MCF 10A (cell line): ENCODE measurements at regions of chr9 and their contacts with region 1.

Region 1: DNA sequence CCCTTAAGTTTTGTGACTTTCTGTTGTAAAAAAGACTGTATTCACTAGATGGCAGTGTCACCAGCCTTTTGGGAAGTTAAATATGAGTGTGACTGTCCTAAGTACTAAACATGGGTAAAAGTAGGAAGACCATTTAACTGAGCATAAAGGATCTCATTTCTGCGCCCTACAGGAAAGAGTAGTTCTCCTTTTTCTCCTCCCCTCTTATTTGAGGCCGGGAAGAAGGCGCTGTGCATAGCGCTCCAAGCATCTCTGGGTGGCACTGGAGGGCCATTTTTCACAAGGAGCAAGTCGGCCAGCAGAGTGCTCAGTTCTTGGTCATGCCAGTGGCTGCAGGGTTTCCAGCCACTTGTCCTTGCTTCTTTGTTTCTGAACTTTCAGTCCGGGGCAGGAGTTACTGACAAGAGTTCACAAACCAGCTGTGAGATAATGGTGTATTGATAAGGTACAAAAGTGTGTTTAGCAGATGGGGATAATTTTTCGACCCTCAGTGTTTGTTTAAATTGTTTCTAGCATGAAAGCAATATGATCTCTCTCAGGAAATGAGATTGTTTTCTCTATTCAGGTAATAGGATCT is 227.6 kb upstream of the DMRT1 start:
- DNase-seq: peak; percentile 75
- H3K4me3 Mint-ChIP-seq: peak overlapping the region; percentile 5
- H3K27ac Mint-ChIP-seq: no peak overlapping the region
- H3K4me1 Mint-ChIP-seq: peaks cover 28% of the 10 kb centered on the region
- H3K27me3 Mint-ChIP-seq: no peaks in the 10 kb centered on the region
- CTCF ChIP-seq: peak; percentile 68

Region 2: DNA sequence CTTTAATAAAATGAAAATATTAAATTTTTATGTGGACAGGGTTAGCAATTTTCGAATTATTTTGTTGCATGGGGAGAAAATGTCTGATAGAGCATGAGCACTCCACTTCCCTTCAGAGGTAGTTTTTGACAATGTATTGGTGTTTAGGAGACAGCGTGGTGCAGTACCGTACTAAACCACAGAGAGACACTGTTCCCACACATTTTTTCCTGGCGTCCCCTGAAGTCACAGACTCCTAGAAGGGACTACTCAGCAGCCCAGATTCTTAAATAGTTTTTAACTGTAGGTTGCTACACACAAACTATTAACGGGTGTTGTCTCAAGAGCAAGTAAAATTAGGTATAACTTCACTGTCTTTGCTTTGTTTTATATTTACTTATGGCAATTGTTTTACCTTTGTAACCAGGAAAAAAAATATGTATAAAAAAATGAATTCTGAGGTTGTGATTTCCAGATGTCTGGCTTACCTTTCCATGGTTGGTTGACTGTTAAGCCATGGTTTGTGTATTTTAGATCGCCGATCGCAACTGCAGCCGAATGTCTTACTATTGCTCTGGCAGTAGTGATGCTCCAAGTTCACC is 228.0 kb before region 1 on chr9:
- CTCF ChIA-PET with region 1: interaction called, 3 read pairs
- POLR2A ChIA-PET with region 1: no interaction called
- intact Hi-C with region 1: loop called (anchors 1 kb)
- DNase-seq: peak; percentile 80
- H3K4me3 Mint-ChIP-seq: no peak overlapping the region
- H3K27ac Mint-ChIP-seq: no peak overlapping the region
- H3K4me1 Mint-ChIP-seq: peaks cover 6% of the 10 kb centered on the region
- H3K27me3 Mint-ChIP-seq: no peaks in the 10 kb centered on the region
- CTCF ChIP-seq: peak; percentile 91

Region 3: GRCh38 chr9:684054-684890 is 70.4 kb after region 1 on chr9:
- CTCF ChIA-PET with region 1: interaction called, 12 read pairs
- POLR2A ChIA-PET with region 1: interaction called, 10 read pairs
- intact Hi-C with region 1: no loop called
- DNase-seq: peak; percentile 70
- H3K4me3 Mint-ChIP-seq: peak overlapping the region; percentile 57
- H3K27ac Mint-ChIP-seq: peak overlapping the region; percentile 93
- H3K4me1 Mint-ChIP-seq: peaks cover 51% of the 10 kb centered on the region
- H3K27me3 Mint-ChIP-seq: no peaks in the 10 kb centered on the region
- CTCF ChIP-seq: no peak

Region 4: GRCh38 chr9:757246-757881 is 143.5 kb after region 1 on chr9:
- CTCF ChIA-PET with region 1: interaction called, 13 read pairs
- POLR2A ChIA-PET with region 1: interaction called, 7 read pairs
- intact Hi-C with region 1: loop called (anchors 1 kb)
- DNase-seq: peak; percentile 74
- H3K4me3 Mint-ChIP-seq: no peak overlapping the region
- H3K27ac Mint-ChIP-seq: no peak overlapping the region
- H3K4me1 Mint-ChIP-seq: peaks cover 7% of the 10 kb centered on the region
- H3K27me3 Mint-ChIP-seq: no peaks in the 10 kb centered on the region
- CTCF ChIP-seq: peak; percentile 50

Region 5: DNA sequence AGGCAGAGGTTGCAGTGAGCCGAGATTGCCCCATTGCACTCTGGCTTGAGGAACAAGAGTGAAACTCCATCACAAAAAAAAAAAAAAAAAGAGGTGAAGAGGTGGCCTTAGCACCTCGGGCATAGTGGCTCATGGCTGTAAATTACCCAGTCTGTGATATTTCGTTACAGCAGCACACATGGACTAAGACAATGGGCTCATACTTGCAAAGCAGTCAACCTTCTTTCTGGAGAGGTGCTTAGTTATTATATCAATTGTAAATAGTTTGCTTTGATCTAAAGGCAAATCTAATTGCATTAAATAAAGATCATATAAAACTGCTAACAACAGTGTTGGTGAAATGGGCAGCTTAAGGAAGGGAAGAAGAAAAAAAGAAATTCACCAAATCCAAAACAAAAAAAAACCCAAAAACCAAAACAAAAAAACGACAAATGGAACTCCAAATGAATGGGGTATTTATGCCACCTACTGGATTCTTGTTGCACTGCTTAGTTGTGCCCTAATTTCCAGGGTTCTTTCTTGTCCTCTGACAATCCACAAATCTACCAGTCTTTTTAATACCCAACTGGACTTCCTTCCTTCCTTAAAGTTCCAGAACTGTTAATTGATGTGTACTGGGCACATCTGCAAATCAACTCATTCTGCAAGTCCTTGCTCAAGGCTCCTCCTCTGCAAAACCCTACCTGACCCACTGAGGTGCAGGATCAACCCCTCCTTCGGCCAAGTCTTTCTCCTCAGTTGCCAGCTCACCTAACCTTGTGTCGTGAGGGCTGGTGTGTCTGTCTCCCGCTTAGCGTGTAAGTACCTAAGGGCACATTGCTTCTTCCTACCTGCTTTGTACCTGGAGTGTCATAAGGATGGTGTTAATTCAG is 192.7 kb after region 1 on chr9:
- CTCF ChIA-PET with region 1: interaction called, 12 read pairs
- POLR2A ChIA-PET with region 1: interaction called, 7 read pairs
- intact Hi-C with region 1: loop called (anchors 1 kb)
- DNase-seq: peak; percentile 60
- H3K4me3 Mint-ChIP-seq: no peak overlapping the region
- H3K27ac Mint-ChIP-seq: no peak overlapping the region
- H3K4me1 Mint-ChIP-seq: peaks cover 18% of the 10 kb centered on the region
- H3K27me3 Mint-ChIP-seq: no peaks in the 10 kb centered on the region
- CTCF ChIP-seq: peak; percentile 79

Region 6: GRCh38 chr9:994005-994404 is 380.1 kb after region 1 on chr9:
- CTCF ChIA-PET with region 1: no interaction called
- POLR2A ChIA-PET with region 1: no interaction called
- intact Hi-C with region 1: loop called (anchors 5 kb)
- DNase-seq: no peak
- H3K4me3 Mint-ChIP-seq: no peak overlapping the region
- H3K27ac Mint-ChIP-seq: no peak overlapping the region
- H3K4me1 Mint-ChIP-seq: no peaks in the 10 kb centered on the region
- H3K27me3 Mint-ChIP-seq: peaks cover 8% of the 10 kb centered on the region
- CTCF ChIP-seq: no peak